ENCODE measurements at regions of chr4 and their contacts with region 1.

Region 1: GRCh38 chr4:6065934-6066590 is 47.8 kb upstream of the C4orf50 start:
- DNase-seq: no peak

Region 2: DNA sequence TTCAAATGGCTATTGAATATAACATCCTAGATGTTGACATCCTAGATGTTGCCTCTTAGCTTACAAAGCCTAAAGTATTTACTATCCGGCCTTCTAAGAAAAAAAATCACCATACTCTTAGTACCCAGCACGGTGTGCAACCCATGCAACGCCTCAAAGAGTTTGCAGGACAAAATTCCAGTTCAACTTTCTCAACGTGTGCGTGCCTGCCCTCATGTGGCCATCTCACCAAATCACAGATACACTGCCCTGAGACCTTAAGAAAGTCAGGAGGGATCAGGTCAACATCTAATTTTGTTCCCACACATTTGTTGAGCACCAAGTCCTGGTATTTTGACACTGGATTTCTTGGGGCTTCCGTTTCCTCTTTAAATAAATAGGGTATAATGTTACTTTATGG is 241.4 kb before region 1 on chr4:
- intact Hi-C with region 1: no loop called
- DNase-seq: peak; percentile 22

Region 3: DNA sequence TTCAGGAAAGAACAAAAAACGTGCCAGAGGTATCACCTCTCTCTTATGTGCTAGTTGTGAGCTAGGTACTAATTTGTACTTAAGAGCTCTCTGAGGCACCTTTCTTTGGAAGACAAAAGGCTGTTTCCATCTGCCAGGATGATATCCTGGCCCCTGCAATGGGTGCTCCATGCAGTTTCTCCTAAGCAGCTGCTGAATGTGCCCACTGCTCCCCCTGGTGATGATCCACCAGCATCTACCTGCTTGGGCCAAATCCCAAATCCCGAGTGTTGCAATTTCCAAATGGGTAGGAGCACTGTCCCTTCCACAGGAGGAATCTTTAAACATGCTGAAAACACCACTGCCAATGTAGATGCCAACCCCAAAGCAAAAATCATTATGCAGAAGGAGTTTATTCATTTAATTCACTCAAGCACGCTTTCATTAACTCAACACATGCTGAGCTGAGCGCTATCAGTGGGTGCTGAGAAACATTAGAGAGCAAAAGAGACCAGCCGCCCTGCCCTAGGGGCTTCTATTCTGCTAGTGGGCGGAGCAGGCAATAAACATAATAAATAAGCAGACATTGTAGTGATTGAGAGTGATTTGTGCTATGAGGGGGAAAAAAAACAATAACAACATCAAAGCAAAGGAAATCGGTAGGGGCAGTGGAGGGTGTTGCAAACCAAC is 21.7 kb after region 1 on chr4:
- intact Hi-C with region 1: loop called in 1 of 2 experiments (anchors 1 kb)
- DNase-seq: no peak